ENCODE measurements at regions of chr13 and their contacts with region 1.

Region 1: DNA sequence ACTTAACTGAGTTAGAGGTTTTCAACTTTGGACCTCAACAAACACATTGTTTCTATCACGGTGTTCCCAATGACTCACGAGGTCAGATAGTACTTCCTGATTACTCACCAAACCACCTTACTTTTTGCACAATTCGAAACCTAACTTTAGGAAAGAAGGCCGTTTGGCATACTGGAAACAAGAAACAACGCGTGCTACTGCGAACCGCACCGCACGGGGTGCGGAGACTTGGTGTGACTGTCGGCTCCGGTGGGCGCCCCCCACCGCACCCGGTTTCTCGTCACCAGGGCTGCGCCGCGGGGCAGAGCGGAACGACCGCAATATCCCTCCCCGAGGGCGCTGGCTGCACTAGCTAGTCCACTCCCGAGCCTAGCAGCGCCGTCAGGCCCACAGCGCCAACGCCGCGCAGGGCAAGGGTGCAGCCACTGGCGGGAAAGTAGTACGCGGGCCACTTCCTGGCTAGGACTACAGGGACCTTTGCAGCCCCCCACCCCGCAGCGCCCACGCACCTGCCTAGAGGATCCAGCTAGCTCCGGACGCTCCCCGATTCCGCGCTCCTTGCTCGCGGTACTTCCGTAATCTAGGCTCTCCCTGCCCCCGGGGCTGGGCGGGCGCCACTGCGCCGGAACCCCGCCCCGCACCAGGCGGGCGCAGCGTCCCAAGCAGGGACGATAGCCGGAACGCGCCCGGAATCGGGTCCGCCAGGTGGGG is at the start of gene PARP4:
- DNase-seq: peak; percentile 65
- H3K4me3 Mint-ChIP-seq: peak within 1 kb of the TSS; percentile 85
- H3K27ac Mint-ChIP-seq: peak within 1 kb of the TSS; percentile 97
- H3K4me1 Mint-ChIP-seq: peaks cover 23% of the 10 kb centered on the region
- H3K27me3 Mint-ChIP-seq: peaks cover 8% of the 10 kb centered on the region
- total RNA-seq, gene PARP4: 58.8 and 60.6 TPM in 2 replicates

Region 2: DNA sequence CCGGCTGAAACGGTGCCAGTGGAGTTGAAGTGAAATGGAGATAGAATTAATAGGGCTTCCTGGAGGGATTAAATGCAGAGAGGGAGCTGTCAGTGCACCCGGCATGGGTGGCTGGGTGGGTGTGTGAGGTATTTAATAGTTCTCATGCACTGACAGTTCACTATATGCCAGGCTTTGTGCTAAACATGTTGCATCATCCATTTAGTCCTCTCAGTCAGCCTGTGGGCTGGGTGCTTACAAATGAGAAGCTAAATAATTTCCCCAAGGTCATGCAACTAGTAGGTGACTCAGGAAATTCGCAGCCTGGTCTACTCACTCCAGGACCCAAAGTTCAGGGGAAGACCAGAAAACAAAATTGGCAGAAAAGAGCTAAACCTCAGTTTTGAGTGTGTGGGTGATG is 415.3 kb before region 1 on chr13:
- intact Hi-C with region 1: loop called (anchors 2 kb)
- DNase-seq: no peak
- H3K4me3 Mint-ChIP-seq: peak overlapping the region; percentile 55
- H3K27ac Mint-ChIP-seq: peak overlapping the region; percentile 80
- H3K4me1 Mint-ChIP-seq: peaks cover 16% of the 10 kb centered on the region
- H3K27me3 Mint-ChIP-seq: peaks cover 27% of the 10 kb centered on the region

Region 3: DNA sequence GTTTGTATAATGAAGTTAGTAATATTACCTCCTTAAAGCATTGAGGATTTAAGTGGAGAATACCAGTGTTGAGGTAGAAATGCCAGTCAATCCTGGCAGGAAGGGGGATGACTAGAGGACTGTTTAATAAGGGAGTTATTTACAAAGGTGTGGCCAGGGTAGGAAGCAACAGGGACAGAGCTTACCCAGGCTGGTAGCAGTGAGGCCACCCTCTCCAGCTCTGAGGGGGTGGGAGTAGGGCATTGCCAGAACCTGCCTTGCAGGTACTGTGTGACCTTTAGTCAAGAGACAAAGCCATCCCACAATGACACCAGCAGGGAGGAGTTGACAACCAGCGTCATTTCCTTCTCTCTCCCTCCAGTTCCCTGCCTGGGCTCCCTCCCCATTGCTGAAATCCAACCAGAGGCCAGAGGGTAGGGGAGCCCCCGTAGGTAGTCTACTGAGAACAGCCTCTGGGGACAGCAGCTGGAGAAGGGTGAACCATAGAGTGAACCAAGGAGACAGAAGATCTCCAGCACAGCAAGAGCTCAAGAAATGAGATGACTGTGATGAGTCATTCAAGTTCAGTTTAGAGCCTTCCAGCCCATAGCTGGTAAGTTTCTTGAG is 385.2 kb before region 1 on chr13:
- intact Hi-C with region 1: no loop called
- DNase-seq: no peak
- H3K4me3 Mint-ChIP-seq: no peak overlapping the region
- H3K27ac Mint-ChIP-seq: no peak overlapping the region
- H3K4me1 Mint-ChIP-seq: peaks cover 46% of the 10 kb centered on the region
- H3K27me3 Mint-ChIP-seq: peaks cover 10% of the 10 kb centered on the region

Region 4: GRCh38 chr13:24270639-24271141 is 241.7 kb before region 1 on chr13:
- intact Hi-C with region 1: loop called (anchors 2 kb)
- DNase-seq: peak; percentile 61
- H3K4me3 Mint-ChIP-seq: peak overlapping the region; percentile 97
- H3K27ac Mint-ChIP-seq: peak overlapping the region; percentile 95
- H3K4me1 Mint-ChIP-seq: peaks cover 81% of the 10 kb centered on the region
- H3K27me3 Mint-ChIP-seq: no peaks in the 10 kb centered on the region

Region 5: GRCh38 chr13:24540236-24541126 is 28.1 kb after region 1 on chr13:
- intact Hi-C with region 1: no loop called
- DNase-seq: no peak
- H3K4me3 Mint-ChIP-seq: no peak overlapping the region
- H3K27ac Mint-ChIP-seq: no peak overlapping the region
- H3K4me1 Mint-ChIP-seq: peaks cover 8% of the 10 kb centered on the region
- H3K27me3 Mint-ChIP-seq: peaks cover 65% of the 10 kb centered on the region

Region 6: GRCh38 chr13:24564881-24565280 is 52.5 kb after region 1 on chr13:
- intact Hi-C with region 1: loop called (anchors 10 kb)
- DNase-seq: no peak
- H3K4me3 Mint-ChIP-seq: no peak overlapping the region
- H3K27ac Mint-ChIP-seq: no peak overlapping the region
- H3K4me1 Mint-ChIP-seq: peaks cover 3% of the 10 kb centered on the region
- H3K27me3 Mint-ChIP-seq: peaks cover 35% of the 10 kb centered on the region

Region 7: GRCh38 chr13:24671386-24672107 is 159.2 kb after region 1 on chr13:
- intact Hi-C with region 1: no loop called
- DNase-seq: no peak
- H3K4me3 Mint-ChIP-seq: no peak overlapping the region
- H3K27ac Mint-ChIP-seq: no peak overlapping the region
- H3K4me1 Mint-ChIP-seq: peaks cover 10% of the 10 kb centered on the region
- H3K27me3 Mint-ChIP-seq: no peaks in the 10 kb centered on the region

Region 8: GRCh38 chr13:24683838-24684599 is 171.7 kb after region 1 on chr13:
- intact Hi-C with region 1: loop called (anchors 5 kb)
- DNase-seq: peak; percentile 37
- H3K4me3 Mint-ChIP-seq: no peak overlapping the region
- H3K27ac Mint-ChIP-seq: peak overlapping the region; percentile 38
- H3K4me1 Mint-ChIP-seq: peaks cover 28% of the 10 kb centered on the region
- H3K27me3 Mint-ChIP-seq: peaks cover 47% of the 10 kb centered on the region

Measured in activated T-helper 2 cell treated with anti-CD3 and anti-CD28 coated beads, Interferon-gamma antibody, Interleukin-2, Interleukin-4, amounts not matched to agents 10 μg/mL and 5 μg/mL and 100 μg/mL, durations not matched to agents 14 hours and 24 hours and 36 hours (primary cell).